ENCODE measurements at regions of chr1 and their contacts with region 1.

Region 1: GRCh38 chr1:8987881-8988617 is 38.2 kb downstream of the SLC2A7 start:
- DNase-seq: peak in 1 of 2 experiments; percentile 44
- H3K4me3 ChIP-seq: no peak overlapping the region
- H3K27ac ChIP-seq: no peak overlapping the region
- H3K4me1 ChIP-seq: peaks cover 6% of the 10 kb centered on the region; the same call in 1 of the 2 replicates
- H3K27me3 ChIP-seq: no peaks in the 10 kb centered on the region
- CTCF ChIP-seq: peak; percentile 82

Region 2: GRCh38 chr1:7893529-7894180 is 1094.4 kb before region 1 on chr1:
- CTCF ChIA-PET with region 1: no interaction called
- POLR2A ChIA-PET with region 1: no interaction called
- intact Hi-C with region 1: no loop called
- DNase-seq: no peak
- H3K4me3 ChIP-seq: no peak overlapping the region
- H3K27ac ChIP-seq: no peak overlapping the region
- H3K4me1 ChIP-seq: no peaks in the 10 kb centered on the region
- H3K27me3 ChIP-seq: no peaks in the 10 kb centered on the region
- CTCF ChIP-seq: no peak

Region 3: DNA sequence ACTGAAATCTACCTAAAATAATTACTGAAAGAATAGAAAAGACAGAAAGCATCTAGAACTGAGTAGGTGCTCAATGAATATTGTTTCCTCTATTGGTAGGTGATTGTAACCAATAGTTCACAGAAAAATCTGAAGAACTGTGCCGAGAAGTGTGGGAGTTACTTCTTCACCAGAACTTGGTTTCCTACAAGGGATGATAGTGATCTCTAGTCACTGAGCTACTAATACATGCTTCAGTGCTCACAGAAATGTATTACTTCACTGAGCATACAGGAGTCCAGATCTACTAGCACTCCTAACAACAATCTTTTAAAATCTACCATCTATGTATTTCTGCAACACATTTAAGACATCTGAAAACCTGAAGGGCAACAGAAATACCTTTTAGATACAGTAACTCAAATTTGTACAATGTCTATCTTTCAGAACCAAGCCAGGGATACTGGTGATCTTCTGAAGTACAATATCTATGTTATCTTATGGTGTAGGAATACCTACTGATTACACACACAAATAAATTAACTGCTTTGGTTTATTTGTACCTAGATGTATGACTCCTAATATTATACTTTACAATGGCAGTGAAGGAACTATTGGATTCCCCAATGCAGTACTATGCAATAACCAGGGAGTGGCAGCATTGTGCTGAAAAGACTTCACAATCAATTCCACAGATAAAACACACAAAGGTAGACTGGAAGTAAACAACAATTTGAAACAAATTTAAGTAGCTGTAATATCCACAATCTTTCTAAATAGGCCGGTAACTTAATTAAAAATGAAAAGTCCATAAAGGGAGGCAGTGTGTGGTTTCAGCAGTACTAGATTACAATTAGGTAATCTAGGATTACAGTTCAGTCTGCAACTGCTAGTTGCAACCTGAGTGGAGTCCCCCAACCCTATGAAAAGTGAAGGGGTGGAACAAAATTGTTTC is 427.2 kb before region 1 on chr1:
- CTCF ChIA-PET with region 1: no interaction called
- POLR2A ChIA-PET with region 1: no interaction called
- intact Hi-C with region 1: loop called (anchors 5 kb)
- DNase-seq: peak; percentile 5 to 43
- H3K4me3 ChIP-seq: no peak overlapping the region
- H3K27ac ChIP-seq: no peak overlapping the region
- H3K4me1 ChIP-seq: peaks cover 13% of the 10 kb centered on the region
- H3K27me3 ChIP-seq: no peaks in the 10 kb centered on the region
- CTCF ChIP-seq: peak; percentile 86

Region 4: DNA sequence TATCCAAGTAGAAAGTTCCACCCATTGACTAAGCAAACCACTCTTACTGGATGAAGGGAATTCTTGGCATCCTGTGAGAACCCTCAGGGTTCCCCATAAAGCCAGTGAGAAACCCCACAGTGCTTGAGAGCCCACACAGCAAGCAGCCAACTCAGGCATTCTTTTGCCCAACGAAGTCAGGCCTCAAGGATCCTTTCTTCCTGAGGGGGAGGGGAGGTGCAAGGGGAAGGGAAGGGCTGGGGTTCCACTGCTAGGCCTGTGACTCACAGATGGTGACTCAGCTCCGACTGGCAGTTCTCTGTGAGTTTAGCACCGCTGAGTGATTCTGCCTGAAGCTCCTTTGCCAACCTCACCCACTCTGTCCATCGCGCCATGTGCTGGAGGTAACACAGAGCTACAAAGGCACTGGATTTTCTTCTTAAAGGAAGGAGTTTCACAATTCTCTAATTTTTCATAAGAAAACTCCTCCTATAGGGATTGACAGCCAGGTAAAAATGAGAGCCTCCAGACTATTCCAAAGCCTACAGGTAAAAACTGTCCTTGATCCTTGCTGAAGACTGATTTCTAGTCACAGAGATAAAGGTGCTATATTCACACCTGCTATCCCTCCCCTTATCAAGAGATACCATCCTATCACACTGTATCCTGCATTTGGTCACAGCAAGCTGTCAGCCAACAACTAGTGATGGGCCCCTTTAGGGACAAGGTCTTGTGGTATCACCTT is 114.4 kb before region 1 on chr1:
- CTCF ChIA-PET with region 1: no interaction called
- POLR2A ChIA-PET with region 1: interaction called, 3 read pairs
- intact Hi-C with region 1: loop called (anchors 5 kb)
- DNase-seq: peak; percentile 91 to 95
- H3K4me3 ChIP-seq: peak overlapping the region; percentile 91; the same call in 1 of the 2 replicates
- H3K27ac ChIP-seq: peak overlapping the region; percentile 96
- H3K4me1 ChIP-seq: peaks cover 46% of the 10 kb centered on the region
- H3K27me3 ChIP-seq: no peaks in the 10 kb centered on the region
- CTCF ChIP-seq: no peak

Region 5: GRCh38 chr1:8962812-8963530 is 25.1 kb before region 1 on chr1:
- CTCF ChIA-PET with region 1: interaction called, 4 read pairs
- POLR2A ChIA-PET with region 1: no interaction called
- intact Hi-C with region 1: loop called (anchors 1 kb)
- DNase-seq: peak; percentile 62 to 63
- H3K4me3 ChIP-seq: no peak overlapping the region
- H3K27ac ChIP-seq: no peak overlapping the region
- H3K4me1 ChIP-seq: no peaks in the 10 kb centered on the region
- H3K27me3 ChIP-seq: no peaks in the 10 kb centered on the region
- CTCF ChIP-seq: peak; percentile 56

Region 6: DNA sequence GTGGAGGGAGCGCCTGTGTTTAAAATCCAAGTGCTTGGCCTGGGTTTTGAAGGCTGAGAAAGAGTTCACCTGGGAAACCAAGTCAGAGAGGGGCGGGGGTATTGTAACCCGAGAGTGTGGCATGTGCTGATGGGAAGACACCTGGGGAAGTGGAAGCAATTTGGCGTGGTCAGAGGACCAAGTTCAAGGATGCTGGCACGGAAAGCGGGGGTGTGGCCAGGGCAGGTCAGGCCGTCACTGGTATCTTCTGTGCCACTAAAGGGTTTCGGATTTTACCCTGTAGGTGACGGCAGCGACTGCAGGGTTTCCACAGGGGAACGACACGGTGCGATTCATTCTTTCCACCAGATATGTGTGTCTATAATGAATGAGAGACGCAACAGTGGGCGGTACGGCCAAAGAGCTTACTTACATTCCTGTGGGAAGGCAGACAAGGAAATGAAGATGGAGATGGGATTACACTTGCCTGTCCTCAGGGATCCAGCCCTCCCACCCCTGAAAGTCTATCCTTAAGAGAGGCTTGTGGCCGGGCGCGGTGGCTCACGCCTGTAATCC is 11.1 kb before region 1 on chr1:
- CTCF ChIA-PET with region 1: no interaction called
- POLR2A ChIA-PET with region 1: no interaction called
- intact Hi-C with region 1: no loop called
- DNase-seq: no peak
- H3K4me3 ChIP-seq: no peak overlapping the region
- H3K27ac ChIP-seq: no peak overlapping the region
- H3K4me1 ChIP-seq: no peaks in the 10 kb centered on the region
- H3K27me3 ChIP-seq: no peaks in the 10 kb centered on the region
- CTCF ChIP-seq: no peak

Region 7: DNA sequence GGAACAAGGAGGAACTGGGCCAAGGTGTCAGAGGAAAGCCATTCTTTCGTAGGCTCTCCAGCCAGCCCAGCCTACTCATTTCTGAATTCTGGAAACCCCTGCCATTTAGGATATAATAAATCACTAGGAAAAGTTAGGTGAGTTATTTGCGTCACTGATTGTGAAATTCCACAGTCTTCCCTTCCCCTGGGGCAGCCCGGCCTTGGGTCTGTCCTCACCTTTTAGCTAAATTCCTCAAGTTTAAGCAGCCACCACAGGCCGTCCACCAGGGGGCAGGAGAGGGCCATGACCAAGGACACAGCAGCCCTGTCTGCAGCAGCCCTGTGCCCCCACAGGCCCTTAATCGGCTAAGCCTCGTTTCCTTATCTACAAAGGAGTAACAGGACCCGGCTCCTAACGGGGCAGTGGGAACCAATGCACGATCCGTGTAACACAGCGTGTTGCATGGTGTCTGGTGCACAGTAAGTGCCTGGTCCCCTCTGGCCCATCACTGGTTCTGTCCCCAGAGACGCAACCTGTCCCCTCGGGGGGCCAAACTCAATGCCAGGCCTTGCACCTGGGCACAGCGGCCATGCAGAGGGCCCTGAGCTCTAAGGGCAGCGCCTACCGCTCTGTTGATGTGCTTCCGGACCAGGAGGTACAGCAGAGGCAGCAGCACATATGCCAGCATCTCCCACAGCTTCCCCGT is 122.8 kb after region 1 on chr1:
- CTCF ChIA-PET with region 1: interaction called, 12 read pairs
- POLR2A ChIA-PET with region 1: no interaction called
- intact Hi-C with region 1: no loop called
- DNase-seq: peak; percentile 91
- H3K4me3 ChIP-seq: no peak overlapping the region
- H3K27ac ChIP-seq: peak overlapping the region; percentile 16; the same call in 1 of the 2 replicates
- H3K4me1 ChIP-seq: peaks cover 8% of the 10 kb centered on the region
- H3K27me3 ChIP-seq: no peaks in the 10 kb centered on the region
- CTCF ChIP-seq: peak; percentile 90

Region 8: DNA sequence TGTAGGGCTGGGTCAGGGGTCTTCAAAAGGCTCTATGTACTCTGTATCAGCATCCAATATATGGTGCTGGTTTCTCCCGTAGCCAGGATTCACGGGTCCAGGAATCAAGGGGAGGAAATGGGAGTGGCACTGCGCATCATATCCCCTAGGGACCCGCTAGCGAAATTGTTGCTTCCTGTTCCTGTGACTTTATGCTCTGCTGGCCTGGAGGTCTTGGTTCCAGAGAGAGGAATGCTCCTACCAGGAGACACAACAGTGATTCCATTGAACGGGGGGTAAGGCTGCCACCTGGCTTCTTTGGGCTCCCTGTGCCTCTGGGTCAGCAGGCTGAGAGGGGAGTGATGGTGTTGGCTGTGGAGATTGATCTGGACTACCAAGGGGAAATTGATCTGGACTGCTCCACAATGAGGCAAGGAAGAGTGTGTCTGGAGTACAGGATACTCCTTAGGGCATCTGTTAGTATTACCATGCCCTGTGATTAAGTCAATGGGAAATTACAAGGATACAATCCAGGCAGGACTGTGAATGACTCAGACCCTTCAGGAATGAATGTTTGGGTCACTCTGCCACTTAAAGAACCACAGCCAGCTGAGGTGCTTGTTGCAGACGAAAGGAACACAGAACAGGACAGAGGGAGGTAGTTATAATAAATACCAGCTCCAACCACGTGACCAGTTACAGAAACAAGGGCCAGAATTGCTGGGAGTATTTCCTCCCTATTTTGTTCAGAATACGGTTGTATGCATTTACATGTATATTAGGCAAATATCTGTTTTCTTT is 314.9 kb after region 1 on chr1:
- CTCF ChIA-PET with region 1: no interaction called
- POLR2A ChIA-PET with region 1: no interaction called
- intact Hi-C with region 1: no loop called
- DNase-seq: peak; percentile 60 to 83
- H3K4me3 ChIP-seq: no peak overlapping the region; the same call in 1 of the 2 replicates
- H3K27ac ChIP-seq: peak overlapping the region; percentile 82
- H3K4me1 ChIP-seq: peaks cover 51% of the 10 kb centered on the region
- H3K27me3 ChIP-seq: no peaks in the 10 kb centered on the region
- CTCF ChIP-seq: no peak

Region 9: DNA sequence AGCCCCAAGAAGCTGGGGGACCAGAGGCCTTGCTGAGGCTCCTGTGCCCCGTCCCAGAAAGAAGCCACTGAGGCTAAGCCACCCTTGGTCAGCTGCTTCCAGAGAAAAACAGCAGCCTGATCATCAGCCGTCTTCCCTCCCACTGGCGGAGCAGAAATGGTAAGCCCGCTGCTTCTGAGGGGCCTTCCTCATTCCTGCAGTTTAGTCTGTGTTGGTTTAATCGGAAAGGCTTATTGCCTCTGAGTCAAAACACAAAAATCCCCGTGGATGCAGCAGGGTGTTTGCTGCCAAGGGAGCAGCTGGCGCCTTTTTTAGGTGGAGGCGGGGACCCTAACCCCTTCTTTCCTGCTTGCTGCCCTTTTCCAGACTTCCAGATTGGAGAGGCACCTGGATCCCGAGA is 338.5 kb after region 1 on chr1:
- CTCF ChIA-PET with region 1: no interaction called
- POLR2A ChIA-PET with region 1: no interaction called
- intact Hi-C with region 1: no loop called
- DNase-seq: no peak
- H3K4me3 ChIP-seq: no peak overlapping the region
- H3K27ac ChIP-seq: no peak overlapping the region
- H3K4me1 ChIP-seq: no peaks in the 10 kb centered on the region
- H3K27me3 ChIP-seq: no peaks in the 10 kb centered on the region
- CTCF ChIP-seq: no peak

Measured in PC-9 (cell line).